ENCODE measurements at regions of chr15 and their contacts with region 1.

Region 1: GRCh38 chr15:58933281-58934113 is at the start of gene SLTM:
- DNase-seq: peak; percentile 96
- H3K4me3 ChIP-seq: peak within 1 kb of the TSS; percentile 24 to 96 (median 56)
- H3K27ac ChIP-seq: peak within 1 kb of the TSS; percentile 97 to 99 (median 98)
- H3K4me1 ChIP-seq: peaks cover 20 to 23% of the 10 kb centered on the region in 2 donors
- H3K27me3 ChIP-seq: no peaks in the 10 kb centered on the region
- CTCF ChIP-seq: peak in 3 of 6 experiments; percentile 20 to 37 (median 31)
- POLR2A ChIP-seq: peak in 1 of 2 donors; percentile 98
- total RNA-seq, gene SLTM: 129 to 166 (median 151) TPM

Region 2: GRCh38 chr15:58666957-58667356 is 266.5 kb before region 1 on chr15:
- intact Hi-C with region 1: no loop called
- DNase-seq: no peak
- H3K4me3 ChIP-seq: no peak overlapping the region
- H3K27ac ChIP-seq: no peak overlapping the region
- H3K4me1 ChIP-seq: no peaks in the 10 kb centered on the region
- H3K27me3 ChIP-seq: no peaks in the 10 kb centered on the region
- CTCF ChIP-seq: no peak
- POLR2A ChIP-seq: no peak

Region 3: DNA sequence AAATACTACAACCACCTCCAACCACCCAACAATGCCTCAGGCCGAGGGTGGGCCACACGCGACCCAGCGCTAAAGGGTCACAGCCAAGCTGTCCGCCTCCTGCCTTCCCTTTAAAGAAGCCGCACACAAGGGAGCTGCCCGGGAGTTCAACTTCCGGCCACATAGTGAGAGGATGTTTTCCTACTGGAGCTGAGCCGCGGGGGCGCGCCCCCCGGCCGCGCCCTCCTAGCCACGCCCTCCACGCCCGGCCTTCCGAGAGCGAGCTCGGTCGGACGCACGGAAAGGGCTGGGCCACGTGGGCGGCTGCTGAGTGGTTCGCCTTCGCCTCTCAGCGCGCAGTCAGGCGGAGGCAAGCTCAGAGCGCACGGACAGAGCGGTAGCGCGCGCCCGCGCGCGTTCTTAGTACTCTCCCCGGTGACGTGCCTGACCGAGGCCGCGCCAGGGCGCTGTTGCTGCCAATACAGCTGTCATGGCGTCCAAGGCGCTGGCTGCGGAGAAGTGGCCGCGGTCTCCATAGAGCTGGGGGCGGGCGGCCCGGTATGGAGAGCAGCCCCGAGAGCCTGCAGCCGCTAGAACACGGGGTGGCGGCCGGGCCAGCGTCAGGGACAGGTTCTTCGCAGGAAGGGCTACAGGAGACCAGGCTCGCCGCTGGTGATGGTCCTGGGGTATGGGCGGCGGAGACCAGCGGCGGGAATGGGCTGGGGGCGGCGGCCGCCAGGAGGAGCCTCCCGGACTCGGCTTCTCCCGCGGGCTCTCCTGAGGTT is 162.5 kb before region 1 on chr15 and contains the start of gene MINDY2:
- intact Hi-C with region 1: loop called (anchors 10 kb)
- DNase-seq: peak; percentile 99
- H3K4me3 ChIP-seq: peak within 1 kb of the TSS; percentile 32 to 91 (median 86)
- H3K27ac ChIP-seq: peak within 1 kb of the TSS; percentile 95 to 98 (median 96)
- H3K4me1 ChIP-seq: peaks cover 23 to 46% of the 10 kb centered on the region in 2 donors
- H3K27me3 ChIP-seq: no peaks in the 10 kb centered on the region
- CTCF ChIP-seq: peak in 3 of 6 experiments; percentile 0 to 29 (median 18)
- POLR2A ChIP-seq: peak; percentile 53 to 98
- total RNA-seq, gene MINDY2: 27.1 to 31.3 (median 28.2) TPM